ENCODE measurements at regions of chr4 and their contacts with region 1.

Region 1: DNA sequence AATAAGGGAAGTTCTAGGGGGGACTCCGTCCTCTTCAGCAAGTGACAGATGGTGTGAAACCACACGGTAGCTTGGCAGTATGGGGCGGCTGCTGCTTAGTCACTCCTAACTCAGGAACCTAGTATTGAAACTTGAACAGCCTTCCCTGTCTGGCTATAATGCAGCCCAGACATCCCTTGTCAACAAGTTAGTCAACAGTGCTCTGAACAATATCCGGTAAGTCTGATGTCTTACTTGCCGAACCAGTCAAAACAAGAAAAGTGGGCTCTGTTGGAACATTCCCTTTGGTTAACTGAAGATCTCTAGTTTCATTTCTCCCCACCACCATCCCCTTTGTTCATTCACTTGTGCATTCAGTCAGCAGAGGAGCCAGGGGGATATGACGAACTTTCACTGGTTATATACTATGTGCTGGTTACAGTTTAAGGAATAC is 18.7 kb upstream of the CXCL13 start:
- DNase-seq: peak; percentile 51
- H3K4me3 Mint-ChIP-seq: peak overlapping the region; percentile 65
- H3K27ac Mint-ChIP-seq: peak overlapping the region; percentile 67
- H3K4me1 Mint-ChIP-seq: peaks cover 61% of the 10 kb centered on the region
- H3K27me3 Mint-ChIP-seq: no peaks in the 10 kb centered on the region

Region 2: DNA sequence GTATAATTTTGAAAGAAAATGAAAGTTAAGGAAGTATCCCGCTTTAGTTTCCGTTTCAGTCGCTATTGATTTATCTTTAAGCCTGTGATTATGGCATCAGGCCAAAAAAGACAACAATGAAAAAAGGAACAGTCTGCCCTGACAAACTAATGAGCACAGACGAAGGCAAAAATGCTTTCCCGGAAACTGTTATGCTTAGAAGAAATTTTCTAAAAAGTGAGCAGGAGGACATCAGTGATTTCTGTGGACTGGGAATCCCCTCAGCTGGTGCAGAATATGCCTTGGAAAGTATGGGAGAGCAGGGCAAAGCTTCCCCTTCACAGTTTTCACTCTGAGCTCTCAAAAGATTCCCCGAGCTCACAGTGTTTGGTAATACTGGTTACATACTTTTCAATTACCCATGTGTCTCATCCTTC is 1558.6 kb before region 1 on chr4:
- intact Hi-C with region 1: loop called (anchors 10 kb)
- DNase-seq: no peak
- H3K4me3 Mint-ChIP-seq: no peak overlapping the region
- H3K27ac Mint-ChIP-seq: no peak overlapping the region
- H3K4me1 Mint-ChIP-seq: peaks cover 28% of the 10 kb centered on the region
- H3K27me3 Mint-ChIP-seq: peaks cover 8% of the 10 kb centered on the region

Region 3: GRCh38 chr4:77031544-77031943 is 555.4 kb before region 1 on chr4:
- intact Hi-C with region 1: loop called (anchors 1 kb)
- DNase-seq: no peak
- H3K4me3 Mint-ChIP-seq: no peak overlapping the region
- H3K27ac Mint-ChIP-seq: no peak overlapping the region
- H3K4me1 Mint-ChIP-seq: peaks cover 40% of the 10 kb centered on the region
- H3K27me3 Mint-ChIP-seq: peaks cover 47% of the 10 kb centered on the region

Region 4: DNA sequence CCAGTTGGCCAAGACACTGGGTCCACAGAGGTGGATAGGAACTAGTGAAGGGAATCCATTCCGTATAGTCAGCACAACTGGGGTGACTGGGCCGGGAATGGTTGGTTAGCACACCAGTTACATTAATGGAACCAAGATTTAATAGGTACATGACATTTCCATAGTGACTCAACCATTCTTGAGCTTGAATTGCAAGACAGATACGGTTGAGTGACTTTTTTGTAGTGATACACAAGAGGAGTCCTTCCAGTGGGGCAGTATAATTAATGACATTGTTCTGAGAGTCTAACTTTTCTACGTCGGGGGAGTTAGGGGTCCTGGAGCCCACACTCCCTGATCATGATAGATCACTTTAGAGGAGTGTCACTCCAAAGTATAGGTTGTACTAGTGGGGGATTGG is 193.0 kb before region 1 on chr4:
- intact Hi-C with region 1: no loop called
- DNase-seq: no peak
- H3K4me3 Mint-ChIP-seq: no peak overlapping the region
- H3K27ac Mint-ChIP-seq: no peak overlapping the region
- H3K4me1 Mint-ChIP-seq: no peaks in the 10 kb centered on the region
- H3K27me3 Mint-ChIP-seq: peaks cover 23% of the 10 kb centered on the region

Region 5: DNA sequence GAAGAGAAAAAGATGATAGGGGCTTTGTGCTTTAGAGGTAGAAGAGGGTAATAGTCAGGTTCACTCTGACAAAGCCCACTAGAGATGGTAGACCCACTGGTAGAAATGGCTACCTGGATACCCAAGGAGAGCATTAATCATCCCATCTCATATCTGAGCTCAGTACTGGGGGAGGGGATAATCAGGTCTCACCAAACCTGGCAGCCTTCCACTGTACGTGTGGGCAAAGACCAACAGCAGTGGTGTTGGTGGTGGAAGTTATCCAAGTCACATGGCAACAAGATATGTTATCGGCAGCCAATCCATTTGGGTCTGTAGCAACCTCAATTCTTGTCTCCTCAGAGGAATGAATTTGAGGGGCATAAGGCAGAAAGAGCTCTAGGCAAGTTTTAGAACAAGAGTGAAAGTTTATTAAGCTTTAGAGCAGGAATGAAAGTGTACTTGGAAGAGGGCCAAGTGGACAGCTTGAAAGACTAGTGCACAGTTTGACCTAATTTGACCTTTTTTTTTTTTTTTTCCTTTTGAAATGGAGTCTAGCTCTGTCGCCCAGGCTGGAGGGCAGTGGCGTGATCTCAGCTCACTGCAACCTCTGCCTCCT is 48.3 kb before region 1 on chr4:
- intact Hi-C with region 1: loop called (anchors 1 kb)
- DNase-seq: no peak
- H3K4me3 Mint-ChIP-seq: no peak overlapping the region
- H3K27ac Mint-ChIP-seq: no peak overlapping the region
- H3K4me1 Mint-ChIP-seq: peaks cover 28% of the 10 kb centered on the region
- H3K27me3 Mint-ChIP-seq: peaks cover 14% of the 10 kb centered on the region

Region 6: GRCh38 chr4:77618383-77619122 is 31.6 kb after region 1 on chr4:
- intact Hi-C with region 1: loop called (anchors 2 kb)
- DNase-seq: peak; percentile 30
- H3K4me3 Mint-ChIP-seq: no peak overlapping the region
- H3K27ac Mint-ChIP-seq: no peak overlapping the region
- H3K4me1 Mint-ChIP-seq: peaks cover 26% of the 10 kb centered on the region
- H3K27me3 Mint-ChIP-seq: peaks cover 28% of the 10 kb centered on the region

Region 7: DNA sequence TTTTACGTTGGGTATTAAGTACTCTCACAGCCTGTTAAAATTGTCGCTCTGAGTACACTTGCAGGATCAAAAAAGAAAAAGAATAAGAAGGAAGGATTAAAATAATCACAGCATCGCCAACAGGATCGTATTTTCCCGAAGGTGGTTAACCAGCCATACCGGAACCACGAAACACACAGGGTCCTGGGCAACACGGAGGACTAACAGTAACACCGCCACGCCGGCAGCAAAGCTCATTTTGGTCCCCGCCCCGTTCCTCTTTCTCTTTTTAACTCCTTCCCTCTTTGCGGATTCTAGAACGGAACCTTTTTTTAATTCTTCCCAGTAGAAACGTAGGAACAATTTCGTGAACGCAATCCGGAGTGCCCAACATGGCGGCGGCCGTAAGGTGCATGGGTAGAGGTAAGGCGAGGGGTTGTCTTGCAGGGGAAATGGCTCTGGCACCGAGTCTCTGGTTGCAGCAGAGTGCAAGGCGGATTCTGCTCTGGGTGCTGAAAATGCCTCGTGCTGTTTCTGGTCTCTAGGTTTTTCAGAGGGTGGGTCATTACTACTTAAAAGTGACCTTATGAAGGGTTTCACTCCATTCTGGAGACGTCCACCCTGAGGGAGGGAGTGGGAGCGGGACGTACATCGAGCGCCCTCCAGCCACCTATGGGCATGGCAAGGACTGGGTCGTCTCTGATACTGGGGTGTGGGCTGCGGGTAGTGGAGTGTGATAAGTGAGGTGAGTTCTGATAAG is 275.7 kb after region 1 on chr4 and contains the start of gene MRPL1:
- intact Hi-C with region 1: loop called (anchors 2 kb)
- DNase-seq: peak; percentile 86
- H3K4me3 Mint-ChIP-seq: peak within 1 kb of the TSS; percentile 93
- H3K27ac Mint-ChIP-seq: peak within 1 kb of the TSS; percentile 99
- H3K4me1 Mint-ChIP-seq: peaks cover 41% of the 10 kb centered on the region
- H3K27me3 Mint-ChIP-seq: no peaks in the 10 kb centered on the region
- total RNA-seq, gene MRPL1: 50.6 and 60.3 TPM in 2 replicates

Measured in activated T-helper 2 cell treated with anti-CD3 and anti-CD28 coated beads, Interferon-gamma antibody, Interleukin-2, Interleukin-4, amounts not matched to agents 10 μg/mL and 5 μg/mL and 100 μg/mL, durations not matched to agents 14 hours and 24 hours and 36 hours (primary cell).